ENCODE measurements at regions of chr22 and their contacts with region 1.

Region 1: DNA sequence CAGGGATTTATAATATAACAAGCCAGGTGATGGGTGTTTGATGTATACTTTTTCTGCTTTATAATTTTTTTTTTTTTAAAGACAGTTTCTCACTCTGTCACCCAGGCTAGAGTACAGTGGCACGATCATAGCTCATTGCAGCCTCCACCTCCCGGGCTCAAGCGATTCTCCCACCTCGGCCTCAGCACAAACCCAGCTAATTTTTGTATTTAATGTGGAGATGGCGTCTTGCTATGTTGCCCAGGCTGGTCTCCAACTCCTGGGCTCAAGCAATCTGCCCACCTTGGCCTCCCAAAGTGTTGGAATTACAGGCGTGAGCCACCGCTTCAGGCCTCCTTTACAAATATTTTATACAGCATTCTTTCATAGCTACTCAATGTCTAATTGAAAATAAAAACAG is 48.6 kb downstream of the MORC2 start:
- DNase-seq: no peak
- H3K4me3 ChIP-seq: no peak overlapping the region
- H3K27ac ChIP-seq: no peak overlapping the region
- H3K4me1 ChIP-seq: peaks cover 12% of the 10 kb centered on the region
- H3K27me3 ChIP-seq: no peaks in the 10 kb centered on the region
- CTCF ChIP-seq: no peak

Region 2: GRCh38 chr22:30763815-30764686 is 155.9 kb before region 1 on chr22:
- intact Hi-C with region 1: loop called (anchors 5 kb)
- DNase-seq: no peak
- H3K4me3 ChIP-seq: no peak overlapping the region
- H3K27ac ChIP-seq: no peak overlapping the region
- H3K4me1 ChIP-seq: peaks cover 6% of the 10 kb centered on the region
- H3K27me3 ChIP-seq: no peaks in the 10 kb centered on the region
- CTCF ChIP-seq: peak; percentile 69

Region 3: GRCh38 chr22:30876915-30877553 is 42.9 kb before region 1 on chr22:
- intact Hi-C with region 1: no loop called
- DNase-seq: peak; percentile 66
- H3K4me3 ChIP-seq: no peak overlapping the region
- H3K27ac ChIP-seq: peak overlapping the region; percentile 85
- H3K4me1 ChIP-seq: peaks cover 65% of the 10 kb centered on the region
- H3K27me3 ChIP-seq: no peaks in the 10 kb centered on the region
- CTCF ChIP-seq: no peak